CD4-positive, alpha-beta memory T cell (primary cell): ENCODE measurements at regions of chrX and their contacts with region 1.

Region 1: DNA sequence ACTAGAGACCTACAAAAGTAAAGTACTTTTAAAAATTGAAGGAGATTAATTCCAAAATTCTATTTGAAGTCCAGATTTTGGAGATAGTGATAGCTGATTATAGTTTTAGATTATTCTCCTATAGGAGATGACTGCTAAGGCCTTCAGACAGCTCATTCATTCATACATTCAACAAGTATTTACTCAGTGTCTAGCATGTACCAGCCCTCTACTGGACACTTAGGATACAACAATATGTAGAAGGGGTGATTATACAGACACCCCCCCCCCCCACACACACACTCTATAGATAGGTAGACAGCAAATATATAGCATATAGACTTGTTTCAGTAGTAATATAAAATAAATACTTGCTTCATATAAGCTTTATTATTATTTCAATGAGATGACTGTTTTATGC is 60.4 kb upstream of the TAF9B start:
- DNase-seq: peak in 4 of 5 donors; percentile 3 to 25 (median 14)
- H3K4me3 ChIP-seq: no peak overlapping the region
- H3K4me3 Mint-ChIP-seq: no peak overlapping the region
- H3K27ac ChIP-seq: no peak overlapping the region
- H3K27ac Mint-ChIP-seq: no peak overlapping the region
- H3K4me1 ChIP-seq: no peaks in the 10 kb centered on the region
- H3K4me1 Mint-ChIP-seq: peaks cover 0 to 2% (median 0%) of the 10 kb centered on the region in 4 donors
- H3K27me3 ChIP-seq: no peaks in the 10 kb centered on the region
- H3K27me3 Mint-ChIP-seq: no peaks in the 10 kb centered on the region

Region 2: DNA sequence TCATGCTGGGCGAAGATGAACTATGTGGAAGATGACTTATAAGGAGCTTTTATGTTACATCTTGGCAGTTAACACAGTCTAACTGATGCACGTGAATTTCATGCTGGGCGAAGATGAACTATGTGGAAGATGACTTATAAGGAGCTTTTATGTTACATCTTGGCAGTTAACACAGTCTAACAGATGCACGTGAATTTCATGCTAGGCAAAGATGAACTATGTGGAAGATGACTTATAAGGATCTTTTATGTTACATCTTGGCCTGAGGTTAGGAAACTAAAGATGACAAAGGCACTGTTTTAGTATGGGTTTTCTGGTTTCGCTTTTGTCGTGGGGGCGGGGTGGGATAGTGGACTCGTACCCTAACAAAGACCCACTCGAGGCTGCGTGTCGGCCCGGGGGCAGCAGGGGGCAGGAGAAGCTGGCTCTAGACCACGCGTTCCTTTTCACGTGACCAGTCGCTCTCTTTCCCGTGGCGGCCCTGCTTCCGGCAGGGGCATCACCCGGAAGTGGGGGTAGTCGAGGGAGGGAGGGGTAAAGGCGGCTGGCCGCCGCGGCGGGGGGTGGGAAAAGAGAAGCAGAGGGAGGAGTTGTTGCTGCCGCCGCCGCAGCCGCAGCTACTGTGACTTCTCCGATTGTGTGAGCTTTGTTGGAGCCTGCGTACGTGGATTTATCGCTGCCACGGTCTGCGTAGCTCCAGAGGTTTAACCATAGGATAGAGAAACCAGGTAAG is 289.6 kb before region 1 on chrX and contains the start of gene ATP7A:
- CTCF ChIA-PET with region 1: no interaction called
- POLR2A ChIA-PET with region 1: no interaction called
- intact Hi-C with region 1: no loop called
- DNase-seq: peak; percentile 85 to 95 (median 91)
- H3K4me3 ChIP-seq: peak within 1 kb of the TSS; percentile 55 to 78
- H3K4me3 Mint-ChIP-seq: peak within 1 kb of the TSS; percentile 93 to 100 (median 96)
- H3K27ac ChIP-seq: peak within 1 kb of the TSS; percentile 82
- H3K27ac Mint-ChIP-seq: peak within 1 kb of the TSS; percentile 93 to 99 (median 98)
- H3K4me1 ChIP-seq: peaks cover 19% of the 10 kb centered on the region
- H3K4me1 Mint-ChIP-seq: peaks cover 10 to 31% (median 17%) of the 10 kb centered on the region in 4 donors
- H3K27me3 ChIP-seq: no peaks in the 10 kb centered on the region
- H3K27me3 Mint-ChIP-seq: no peaks in the 10 kb centered on the region
- total RNA-seq, gene ATP7A: 15.3 to 16.8 TPM

Region 3: GRCh38 chrX:78125148-78125547 is 74.7 kb before region 1 on chrX:
- CTCF ChIA-PET with region 1: interaction called, 13 read pairs
- POLR2A ChIA-PET with region 1: no interaction called
- intact Hi-C with region 1: no loop called
- DNase-seq: no peak
- H3K4me3 ChIP-seq: no peak overlapping the region
- H3K4me3 Mint-ChIP-seq: no peak overlapping the region
- H3K27ac ChIP-seq: no peak overlapping the region
- H3K27ac Mint-ChIP-seq: peak overlapping the region in 5 of 7 donors; percentile 45 to 88 (median 59)
- H3K4me1 ChIP-seq: no peaks in the 10 kb centered on the region
- H3K4me1 Mint-ChIP-seq: peaks cover 2 to 12% (median 6%) of the 10 kb centered on the region in 4 donors
- H3K27me3 ChIP-seq: no peaks in the 10 kb centered on the region
- H3K27me3 Mint-ChIP-seq: no peaks in the 10 kb centered on the region